ENCODE measurements at regions of chr11 and their contacts with region 1.

Region 1: GRCh38 chr11:2196970-2197770 is 25.6 kb upstream of the TH start:
- DNase-seq: peak; percentile 92

Region 2: GRCh38 chr11:2122222-2123085 is 74.7 kb before region 1 on chr11:
- intact Hi-C with region 1: no loop called
- DNase-seq: no peak

Region 3: GRCh38 chr11:2208691-2209369 is 11.7 kb after region 1 on chr11:
- intact Hi-C with region 1: no loop called
- DNase-seq: peak; percentile 71

Region 4: DNA sequence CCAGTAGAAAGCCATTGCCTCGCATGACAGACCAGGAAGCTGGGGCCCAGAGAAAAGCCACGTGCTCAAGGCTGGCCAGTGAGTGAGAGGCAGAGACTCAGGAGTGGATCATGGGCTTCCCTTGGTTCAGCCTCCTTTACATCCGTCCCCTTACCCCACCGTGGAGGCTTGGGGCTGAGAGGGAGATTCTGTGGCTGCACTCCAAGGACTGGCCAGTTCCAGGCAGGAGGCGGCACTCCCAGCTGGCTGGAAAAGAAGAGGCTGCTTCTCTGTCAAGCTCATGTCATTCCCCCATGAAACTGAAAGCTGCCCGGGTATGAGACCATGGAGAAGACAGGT is 79.8 kb after region 1 on chr11:
- intact Hi-C with region 1: no loop called
- DNase-seq: no peak

Region 5: DNA sequence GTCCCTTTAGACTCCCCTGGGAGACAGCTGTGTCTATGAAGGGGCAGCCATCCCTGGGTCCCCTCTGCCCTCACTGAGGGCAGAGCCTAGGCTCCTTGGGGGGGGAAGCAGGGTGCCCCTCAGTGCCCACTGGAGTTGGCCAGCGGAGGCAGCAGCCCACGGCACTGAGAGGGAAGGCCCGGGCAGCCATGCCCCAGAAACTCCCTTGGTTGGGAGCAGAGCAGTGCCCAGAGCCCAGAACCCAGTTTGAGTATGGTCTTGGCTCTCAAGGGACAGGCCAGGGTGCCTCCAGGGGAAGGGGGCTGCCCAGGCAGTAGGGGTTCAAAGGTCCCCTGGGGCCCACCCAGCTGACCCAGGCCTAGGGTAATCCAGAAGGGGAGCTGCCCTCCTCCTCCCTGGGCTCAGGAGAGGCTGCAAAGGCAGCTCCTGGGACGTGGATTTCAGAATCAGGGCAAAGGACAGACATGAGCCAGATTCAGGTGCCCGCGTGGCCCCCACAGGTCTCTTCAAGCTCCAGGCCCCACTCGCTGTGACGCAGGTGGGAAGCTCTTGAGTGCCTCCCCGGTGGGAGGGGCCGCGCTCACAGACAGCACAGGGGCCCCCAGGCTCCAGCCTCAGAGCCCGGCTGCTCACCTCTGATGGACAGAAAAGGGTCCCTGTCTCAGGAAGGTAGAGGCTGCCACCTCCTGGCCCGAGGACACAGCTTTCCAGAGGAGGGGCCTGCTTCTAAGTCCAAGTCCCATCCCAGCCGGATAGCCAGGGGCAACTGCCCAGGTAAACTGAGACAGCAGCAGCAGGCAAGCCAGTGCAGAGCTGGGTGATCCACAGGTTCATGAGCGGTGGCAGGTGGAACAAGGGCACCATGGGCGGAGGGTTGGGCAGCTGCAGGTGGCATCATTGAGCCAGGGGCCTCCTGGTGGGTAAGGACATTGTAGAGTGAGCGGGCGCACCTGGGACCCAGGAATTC is 101.9 kb after region 1 on chr11:
- intact Hi-C with region 1: loop called (anchors 1 kb)
- DNase-seq: peak; percentile 74

Region 6: GRCh38 chr11:2420502-2421225 is 223.5 kb after region 1 on chr11:
- intact Hi-C with region 1: loop called (anchors 1 kb)
- DNase-seq: peak; percentile 89

Region 7: DNA sequence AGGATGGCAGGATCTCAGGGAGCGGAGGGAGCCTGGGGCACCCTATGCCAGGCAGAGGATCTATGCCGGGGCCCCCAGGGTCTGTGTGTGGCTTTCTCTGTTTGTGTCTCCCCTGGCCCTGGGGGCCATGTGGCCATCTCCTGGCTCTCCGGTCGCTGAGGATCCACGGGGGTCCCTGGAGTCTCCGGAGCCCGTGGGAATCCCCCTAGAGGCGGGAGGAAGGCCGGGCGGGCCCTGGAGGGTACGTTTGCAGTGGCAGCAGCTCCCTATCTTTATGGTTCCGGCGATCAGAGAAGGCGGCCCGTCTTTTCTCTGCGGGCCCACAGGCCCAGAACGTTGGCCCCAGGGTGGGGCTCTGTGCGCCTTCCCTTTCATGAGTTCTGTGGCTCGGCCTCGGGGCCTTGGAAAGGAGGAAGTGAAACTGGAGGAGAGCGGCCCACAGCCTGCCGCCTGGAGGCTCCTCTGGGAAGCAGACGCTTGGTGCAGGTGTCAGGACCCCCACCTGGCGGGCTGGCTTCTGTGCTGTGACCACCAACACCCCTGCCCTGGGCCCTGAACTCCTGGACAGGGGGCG is 329.7 kb after region 1 on chr11:
- intact Hi-C with region 1: loop called (anchors 5 kb)
- DNase-seq: peak; percentile 77

Region 8: DNA sequence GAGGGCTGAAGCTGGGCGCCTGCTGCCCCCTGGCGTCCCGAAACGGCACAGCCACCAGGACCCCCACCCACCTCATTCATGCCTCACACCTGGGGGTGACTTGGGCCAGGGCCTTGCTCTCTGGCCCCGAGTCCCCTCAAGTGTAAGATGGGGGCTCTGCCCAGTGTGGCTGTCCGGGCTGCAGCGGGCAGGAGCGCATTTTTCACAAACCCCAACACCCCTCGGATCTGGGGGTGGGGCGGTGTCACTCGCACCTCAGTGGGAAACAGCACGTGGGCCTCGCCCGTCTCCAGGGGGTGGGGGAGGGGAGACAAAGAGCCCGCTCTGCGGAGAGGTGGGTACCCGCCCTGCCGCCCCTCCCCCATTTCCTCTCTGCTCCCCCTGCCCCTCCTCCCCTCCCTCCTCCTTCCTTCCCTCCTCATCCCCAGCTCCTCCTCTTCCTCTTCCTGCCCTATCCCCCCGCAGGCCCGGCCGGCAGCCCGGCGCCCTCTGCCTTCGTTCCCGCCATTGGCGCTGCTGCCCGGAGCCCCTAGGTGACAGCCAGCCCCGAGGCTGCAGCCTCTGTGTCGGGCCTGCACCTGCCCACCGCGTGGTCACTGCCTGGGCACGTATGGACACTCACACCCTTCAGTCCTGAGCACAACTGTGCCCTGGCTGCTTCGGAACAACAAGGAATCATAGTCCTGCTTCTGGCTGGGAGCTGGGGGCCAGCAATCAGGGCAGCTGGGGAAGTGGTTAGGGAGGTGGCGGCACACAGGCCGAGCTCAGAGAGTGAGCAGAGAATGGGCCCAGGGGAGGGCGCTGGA is 695.2 kb after region 1 on chr11:
- intact Hi-C with region 1: loop called (anchors 10 kb)
- DNase-seq: no peak

Measured in cardiac septum (tissue), 1 donor.